GM10248 (cell line): ENCODE measurements at regions of chr7 and their contacts with region 1.

Region 1: GRCh38 chr7:143299840-143300239 is 11.7 kb downstream of the CASP2 start:
- DNase-seq: no peak
- CTCF ChIP-seq: peak; percentile 29

Region 2: DNA sequence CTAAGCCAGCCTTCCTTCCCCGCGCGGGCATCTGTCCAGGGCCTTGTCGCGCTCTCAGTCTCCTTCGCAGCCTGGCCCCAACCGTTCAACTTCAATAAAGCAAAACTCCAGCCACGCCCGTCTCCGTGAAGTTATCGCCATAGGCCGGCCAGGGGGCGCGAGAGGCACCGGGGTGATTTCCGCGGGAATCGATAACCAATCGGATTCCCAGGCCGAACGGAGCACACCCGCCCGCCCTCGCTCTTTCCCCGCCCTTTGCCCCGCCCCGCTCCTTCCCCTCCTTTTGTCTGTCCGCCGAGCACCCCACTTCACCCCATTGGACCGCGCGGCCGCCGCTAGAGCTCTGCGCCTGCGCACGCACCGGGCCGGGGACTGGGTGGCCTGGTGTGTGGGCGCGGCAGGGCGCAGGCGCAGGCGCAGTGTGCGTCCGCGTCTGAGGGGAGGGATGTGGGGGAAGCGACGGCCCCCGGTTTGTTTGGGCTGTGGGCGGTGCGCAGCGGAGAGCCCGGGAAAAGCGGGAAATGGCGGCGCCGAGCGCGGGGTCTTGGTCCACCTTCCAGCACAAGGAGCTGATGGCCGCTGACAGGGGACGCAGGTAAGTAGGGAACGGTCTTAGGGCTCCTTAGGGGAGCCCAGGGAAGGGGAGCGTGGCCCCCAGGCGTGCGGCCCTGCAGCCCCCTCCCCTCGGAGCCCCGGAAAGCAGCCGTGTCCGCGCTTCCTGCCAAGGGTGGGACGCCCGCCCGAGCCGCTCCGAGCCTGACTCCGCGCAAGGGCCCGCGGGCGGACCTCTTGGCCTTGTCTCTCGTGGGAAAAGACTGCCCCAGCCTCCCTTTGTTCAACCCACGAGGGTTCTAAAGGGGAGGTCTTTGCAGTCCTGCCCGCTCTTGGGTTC is 11.7 kb before region 1 on chr7 and contains the start of gene CASP2:
- CTCF ChIA-PET with region 1: interaction called, 18 read pairs
- POLR2A ChIA-PET with region 1: interaction called, 21 read pairs
- DNase-seq: peak; percentile 100
- CTCF ChIP-seq: peak; percentile 28